HEK293T (cell line): ENCODE measurements at regions of chr12 and their contacts with region 1.

Region 1: GRCh38 chr12:56636675-56637540 is 6.8 kb upstream of the BAZ2A start:
- DNase-seq: peak; percentile 92

Region 2: DNA sequence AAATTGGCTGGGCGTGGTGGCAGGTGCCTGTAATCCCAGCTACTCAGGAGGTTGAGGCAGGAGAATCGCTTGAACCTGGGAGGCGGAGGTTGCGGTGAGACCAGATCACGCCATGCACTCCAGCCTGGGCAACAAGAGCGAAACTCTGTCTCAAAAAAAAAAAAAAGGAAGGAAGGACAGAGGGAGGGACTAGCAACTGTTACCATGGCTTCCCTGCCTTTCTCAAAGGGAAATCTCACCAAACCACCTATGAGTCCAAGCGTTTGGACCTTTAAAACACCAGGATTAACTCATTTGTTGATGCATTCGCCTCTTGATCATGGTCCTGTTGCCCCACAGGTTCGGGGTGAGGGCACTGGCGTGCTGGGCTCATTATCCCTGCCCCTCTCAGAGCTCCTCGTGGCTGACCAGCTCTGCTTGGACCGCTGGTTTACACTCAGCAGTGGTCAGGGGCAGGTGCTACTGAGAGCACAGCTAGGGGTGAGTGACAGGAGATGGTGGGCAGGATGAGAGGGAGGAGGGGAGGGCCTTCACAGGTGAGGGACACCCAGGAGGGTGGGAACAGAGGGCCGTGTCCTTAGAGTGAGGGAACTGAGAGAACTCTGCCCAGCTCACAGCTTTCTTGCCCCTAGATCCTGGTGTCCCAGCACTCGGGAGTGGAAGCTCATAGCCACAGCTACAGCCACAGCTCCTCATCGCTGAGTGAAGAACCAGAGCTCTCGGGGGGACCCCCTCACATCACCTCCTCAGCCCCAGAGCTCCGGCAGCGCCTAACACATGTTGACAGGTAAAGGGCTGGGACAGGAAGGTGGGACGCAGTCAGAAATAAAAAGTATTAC is 494.7 kb before region 1 on chr12:
- CTCF ChIA-PET with region 1: no interaction called
- POLR2A ChIA-PET with region 1: no interaction called
- DNase-seq: no peak

Region 3: DNA sequence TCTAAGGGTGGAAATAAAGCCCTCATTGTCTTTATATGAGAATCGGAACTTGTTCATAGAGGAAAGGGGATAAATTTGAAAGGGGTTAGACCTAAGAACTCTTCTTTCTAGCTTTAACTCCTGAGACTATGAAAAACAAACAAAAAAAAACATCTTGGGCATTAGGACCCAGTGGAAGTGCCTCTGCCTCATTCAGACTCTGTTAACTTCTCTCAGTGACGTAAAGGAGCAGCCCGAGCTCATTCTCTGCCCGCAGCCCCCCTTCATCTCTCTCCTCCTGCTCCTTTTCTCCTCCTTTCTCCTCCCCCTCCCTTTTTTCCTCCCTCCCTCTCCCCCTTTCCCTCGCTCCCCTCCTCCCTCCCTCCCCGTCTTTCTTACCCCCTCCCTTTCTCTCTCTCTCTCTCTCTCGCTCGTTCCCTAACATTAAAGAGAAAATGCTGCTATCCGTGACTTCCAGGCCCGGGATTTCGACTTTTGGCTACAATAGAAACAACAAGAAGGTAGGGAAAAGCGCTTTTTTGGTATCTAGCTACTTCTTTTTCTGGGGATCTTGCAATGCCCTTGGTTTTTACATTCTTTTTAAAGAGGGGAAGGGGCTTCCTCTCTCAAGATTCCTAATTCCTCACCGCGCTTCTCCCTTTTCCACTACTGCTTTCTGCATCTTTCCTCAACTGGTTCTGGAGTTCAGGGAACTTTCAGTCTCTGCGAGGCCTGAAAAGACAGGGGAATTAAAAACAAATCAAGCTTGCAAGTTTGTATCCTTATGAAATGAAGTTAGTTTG is 115.1 kb before region 1 on chr12 and contains the start of gene RBMS2:
- CTCF ChIA-PET with region 1: interaction called, 8 read pairs
- POLR2A ChIA-PET with region 1: interaction called, 10 read pairs
- DNase-seq: peak; percentile 76

Region 4: DNA sequence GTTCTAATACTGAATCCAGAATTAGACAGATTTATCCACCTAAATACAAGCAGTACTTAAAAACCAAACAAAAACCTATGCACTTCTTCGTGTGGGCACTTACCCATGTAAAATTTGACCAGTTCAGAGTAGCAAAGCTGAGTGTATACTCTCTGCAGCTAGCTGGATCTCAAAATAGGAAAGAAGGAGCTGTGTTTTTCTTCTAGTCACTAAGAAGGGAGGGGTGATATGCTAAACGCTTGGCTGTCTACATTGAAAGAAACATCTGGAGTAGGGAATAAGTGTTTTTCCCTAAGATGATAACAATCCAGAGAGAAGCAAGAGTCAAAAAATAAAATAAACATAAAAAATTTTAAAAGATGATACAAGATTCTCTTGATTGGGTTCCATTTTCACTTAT is 95.3 kb before region 1 on chr12:
- CTCF ChIA-PET with region 1: no interaction called
- POLR2A ChIA-PET with region 1: no interaction called
- DNase-seq: no peak